ENCODE measurements at regions of chr15 and their contacts with region 1.

Region 1: GRCh38 chr15:81480645-81481053 is 106.6 kb upstream of the TMC3 start:
- DNase-seq: no peak
- H3K4me3 ChIP-seq: no peak overlapping the region
- H3K27ac ChIP-seq: no peak overlapping the region
- H3K4me1 ChIP-seq: no peaks in the 10 kb centered on the region
- H3K27me3 ChIP-seq: no peaks in the 10 kb centered on the region
- CTCF ChIP-seq: peak; percentile 78 to 87

Region 2: DNA sequence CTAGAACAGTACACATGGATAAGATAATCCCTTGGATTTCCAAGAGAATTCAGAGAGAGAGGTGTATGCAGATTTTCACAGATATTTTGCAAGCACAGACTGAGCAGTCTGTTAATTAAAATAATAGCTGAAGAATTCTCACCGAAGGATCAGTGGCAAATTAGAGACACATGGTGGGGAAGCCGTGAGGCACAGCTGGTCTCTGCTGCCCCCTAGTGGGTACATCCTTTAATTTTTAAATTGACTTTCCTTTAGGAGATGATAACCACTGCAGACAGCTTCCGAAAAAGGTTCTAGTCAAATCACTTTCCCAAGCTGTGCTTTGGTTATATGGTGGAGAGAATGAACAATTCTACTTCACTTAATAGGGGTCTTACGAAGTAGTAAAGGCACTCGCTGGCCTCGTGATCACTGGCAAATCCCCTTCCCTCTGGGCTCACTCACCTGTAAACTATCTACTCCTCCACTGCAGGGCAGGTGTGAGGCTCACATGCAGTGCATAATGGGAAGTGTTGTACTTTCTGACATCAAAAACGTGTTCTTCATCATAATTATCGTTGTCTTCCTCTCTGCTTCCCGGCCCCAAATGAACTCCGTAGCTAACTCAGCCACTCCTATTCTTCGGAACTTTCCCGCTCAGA is 510.5 kb before region 1 on chr15:
- intact Hi-C with region 1: no loop called
- DNase-seq: no peak
- H3K4me3 ChIP-seq: no peak overlapping the region
- H3K27ac ChIP-seq: no peak overlapping the region
- H3K4me1 ChIP-seq: peaks cover 0 to 11% (median 0%) of the 10 kb centered on the region in 4 donors
- H3K27me3 ChIP-seq: no peaks in the 10 kb centered on the region
- CTCF ChIP-seq: peak; percentile 80 to 88

Region 3: GRCh38 chr15:81939604-81940440 is 459.2 kb after region 1 on chr15:
- intact Hi-C with region 1: loop called (anchors 10 kb)
- DNase-seq: no peak
- H3K4me3 ChIP-seq: no peak overlapping the region
- H3K27ac ChIP-seq: no peak overlapping the region
- H3K4me1 ChIP-seq: peaks cover 0 to 3% (median 0%) of the 10 kb centered on the region in 4 donors
- H3K27me3 ChIP-seq: no peaks in the 10 kb centered on the region
- CTCF ChIP-seq: peak; percentile 48 to 49

Measured in tibial artery (tissue), 4 donors.